ENCODE measurements at regions of chr2 and their contacts with region 1.

Region 1: GRCh38 chr2:211035548-211036185 is 479.3 kb downstream of the CPS1 start:
- DNase-seq: peak; percentile 58
- H3K4me3 Mint-ChIP-seq: no peak overlapping the region
- H3K27ac Mint-ChIP-seq: no peak overlapping the region
- H3K4me1 Mint-ChIP-seq: peaks cover 6% of the 10 kb centered on the region
- H3K27me3 Mint-ChIP-seq: peaks cover 81% of the 10 kb centered on the region
- CTCF ChIP-seq: peak; percentile 43

Region 2: GRCh38 chr2:210577263-210578071 is 458.2 kb before region 1 on chr2:
- CTCF ChIA-PET with region 1: interaction called, 3 read pairs
- POLR2A ChIA-PET with region 1: no interaction called
- intact Hi-C with region 1: loop called (anchors 1 kb)
- DNase-seq: peak; percentile 59
- H3K4me3 Mint-ChIP-seq: no peak overlapping the region
- H3K27ac Mint-ChIP-seq: no peak overlapping the region
- H3K4me1 Mint-ChIP-seq: no peaks in the 10 kb centered on the region
- H3K27me3 Mint-ChIP-seq: no peaks in the 10 kb centered on the region
- CTCF ChIP-seq: peak; percentile 71

Region 3: DNA sequence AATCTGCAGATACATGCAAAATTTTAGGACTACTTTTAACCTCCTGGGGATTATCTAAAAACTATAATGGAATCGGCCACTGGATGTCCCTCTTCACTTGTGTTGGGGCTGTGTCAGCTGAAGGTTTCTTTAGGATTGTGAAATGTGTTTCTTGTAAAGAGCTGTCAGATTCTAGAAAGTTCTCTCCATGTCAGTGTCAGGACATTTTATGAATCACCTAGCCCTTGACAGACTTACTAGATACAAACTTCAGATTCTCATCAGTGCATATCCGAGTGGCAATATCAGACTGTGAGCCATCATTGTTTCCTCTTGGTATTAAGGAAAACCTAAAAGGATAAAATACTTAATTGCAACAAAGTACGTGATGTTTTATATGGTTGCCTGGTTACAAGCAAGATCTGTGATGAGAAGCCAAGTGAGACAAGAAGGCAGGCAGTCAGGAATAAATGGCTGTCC is 372.0 kb before region 1 on chr2:
- CTCF ChIA-PET with region 1: no interaction called
- POLR2A ChIA-PET with region 1: no interaction called
- intact Hi-C with region 1: loop called (anchors 1 kb)
- DNase-seq: peak; percentile 26
- H3K4me3 Mint-ChIP-seq: no peak overlapping the region
- H3K27ac Mint-ChIP-seq: no peak overlapping the region
- H3K4me1 Mint-ChIP-seq: no peaks in the 10 kb centered on the region
- H3K27me3 Mint-ChIP-seq: no peaks in the 10 kb centered on the region
- CTCF ChIP-seq: no peak

Region 4: DNA sequence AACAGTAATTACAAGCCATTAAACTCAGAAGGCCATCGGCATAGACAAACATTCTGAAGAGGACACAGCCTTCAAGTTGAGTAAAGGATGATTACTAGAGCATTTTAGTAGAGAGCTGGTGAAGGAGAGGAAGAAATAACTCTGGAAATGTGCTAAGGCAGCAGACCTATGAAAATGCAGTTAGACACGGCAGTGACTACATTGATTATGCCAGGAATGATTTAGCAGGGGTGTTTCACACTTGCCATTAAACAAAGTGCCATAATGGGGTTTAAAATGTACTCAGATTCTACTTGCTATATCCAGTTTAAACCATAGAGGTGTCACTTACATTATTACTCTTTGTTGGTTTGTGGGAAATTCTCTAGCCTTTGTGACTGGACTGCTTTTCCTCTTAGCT is 107.0 kb before region 1 on chr2:
- CTCF ChIA-PET with region 1: no interaction called
- POLR2A ChIA-PET with region 1: no interaction called
- intact Hi-C with region 1: no loop called
- DNase-seq: no peak
- H3K4me3 Mint-ChIP-seq: no peak overlapping the region
- H3K27ac Mint-ChIP-seq: no peak overlapping the region
- H3K4me1 Mint-ChIP-seq: no peaks in the 10 kb centered on the region
- H3K27me3 Mint-ChIP-seq: peaks cover 28% of the 10 kb centered on the region
- CTCF ChIP-seq: no peak

Measured in MCF 10A (cell line).